CD8-positive, alpha-beta memory T cell (primary cell): ENCODE measurements at regions of chr10 and their contacts with region 1.

Region 1: DNA sequence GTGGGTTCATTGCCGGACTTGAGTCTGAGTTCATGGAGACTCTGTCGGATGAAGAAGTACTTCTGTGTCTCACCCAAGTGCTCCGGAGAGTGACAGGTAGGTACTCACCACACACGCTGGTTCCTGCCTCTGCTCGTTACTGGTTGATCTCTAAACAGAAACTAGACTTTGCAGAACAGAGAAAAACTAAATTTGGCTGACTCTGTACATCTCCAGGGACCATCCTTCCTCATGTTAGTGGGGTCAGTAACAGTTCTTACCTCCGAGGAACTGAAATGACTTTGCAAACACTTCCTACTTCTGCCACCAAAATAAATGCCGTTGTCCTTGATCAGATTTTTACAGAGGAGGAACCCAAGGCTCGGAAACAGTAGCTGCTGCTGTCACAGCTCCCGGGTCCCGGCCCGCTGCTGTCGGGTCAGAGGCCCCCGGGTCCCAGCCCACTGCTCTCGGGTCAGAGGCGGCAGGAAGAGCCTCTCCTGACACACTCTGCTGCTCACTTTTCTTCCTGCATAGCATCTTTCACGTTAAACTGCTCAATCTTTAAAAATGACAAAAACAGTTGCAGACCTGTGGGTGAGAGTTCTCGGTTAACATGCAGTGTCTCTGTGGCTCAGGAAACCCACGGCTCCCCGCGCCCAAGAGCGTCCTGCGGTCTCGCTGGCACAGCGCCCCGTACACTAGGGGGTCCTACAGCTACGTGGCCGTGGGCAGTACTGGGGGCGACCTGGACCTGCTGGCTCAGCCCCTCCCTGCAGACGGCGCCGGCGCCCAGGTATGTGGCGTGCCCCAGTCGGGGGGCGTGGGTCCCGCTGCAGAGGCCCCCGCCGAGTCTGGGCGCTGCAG is 4.8 kb upstream of the MTG1 start:
- DNase-seq: peak; percentile 27 to 68 (median 45)
- H3K4me3 ChIP-seq: peak overlapping the region; percentile 84
- H3K4me3 Mint-ChIP-seq: peak overlapping the region; percentile 80 to 91 (median 88)
- H3K27ac ChIP-seq: peak overlapping the region; percentile 81
- H3K27ac Mint-ChIP-seq: peak overlapping the region; percentile 87 to 97 (median 94)
- H3K4me1 ChIP-seq: peaks cover 38% of the 10 kb centered on the region
- H3K4me1 Mint-ChIP-seq: peaks cover 36 to 48% (median 42%) of the 10 kb centered on the region in 3 donors
- H3K27me3 ChIP-seq: no peaks in the 10 kb centered on the region
- H3K27me3 Mint-ChIP-seq: no peaks in the 10 kb centered on the region

Region 2: GRCh38 chr10:133335246-133336117 is 53.7 kb before region 1 on chr10:
- CTCF ChIA-PET with region 1: interaction called, 6 read pairs
- POLR2A ChIA-PET with region 1: interaction called, 23 read pairs
- DNase-seq: peak; percentile 81 to 96 (median 87)
- H3K4me3 ChIP-seq: peak overlapping the region; percentile 56
- H3K4me3 Mint-ChIP-seq: peak overlapping the region; percentile 71 to 91 (median 82)
- H3K27ac ChIP-seq: peak overlapping the region; percentile 80
- H3K27ac Mint-ChIP-seq: peak overlapping the region; percentile 71 to 95 (median 94)
- H3K4me1 ChIP-seq: peaks cover 19% of the 10 kb centered on the region
- H3K4me1 Mint-ChIP-seq: peaks cover 3 to 7% (median 4%) of the 10 kb centered on the region in 3 donors
- H3K27me3 ChIP-seq: no peaks in the 10 kb centered on the region
- H3K27me3 Mint-ChIP-seq: peaks cover 0 to 6% of the 10 kb centered on the region in 2 donors

Region 3: DNA sequence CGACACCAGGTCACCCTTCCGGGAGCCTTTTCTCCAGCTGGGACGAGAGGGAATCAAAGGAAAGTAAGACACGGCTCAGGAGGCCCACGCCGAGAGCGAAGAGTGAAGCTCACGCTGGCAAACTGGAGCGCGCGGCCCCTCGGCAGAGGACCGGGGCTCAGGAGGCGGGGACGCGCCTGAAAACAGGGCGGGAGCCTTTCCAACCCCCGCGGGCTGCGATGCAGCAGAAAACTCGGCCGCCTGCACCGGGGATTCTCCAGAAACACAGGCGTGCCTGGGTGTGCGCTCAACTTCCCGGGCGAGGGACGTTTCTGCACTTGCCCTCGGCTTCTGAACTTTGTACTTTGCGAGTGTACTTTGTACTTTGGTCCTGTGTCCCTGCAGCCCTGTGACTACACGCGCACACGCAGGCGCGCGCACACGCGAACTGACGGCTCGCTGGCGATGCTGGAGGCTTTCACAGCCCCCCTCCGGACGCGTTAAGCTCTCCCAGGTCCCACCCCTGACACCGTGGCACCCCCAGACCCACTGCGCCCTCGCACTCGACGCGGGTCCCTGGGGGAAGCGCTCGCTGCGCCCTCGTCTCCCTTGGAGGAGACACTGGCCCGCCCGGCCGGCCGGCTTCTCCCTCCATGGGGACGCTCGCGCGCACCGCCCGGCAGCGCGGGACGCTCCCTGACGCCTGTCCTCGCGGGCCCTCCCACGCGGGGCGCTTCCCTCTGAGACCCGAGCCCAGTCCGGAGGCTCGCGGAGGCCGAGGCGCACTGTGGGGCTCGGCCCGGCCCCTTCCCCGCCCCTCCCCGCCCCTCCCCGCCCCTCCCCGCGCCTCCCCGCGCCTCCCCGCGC is 10.7 kb before region 1 on chr10:
- CTCF ChIA-PET with region 1: interaction called, 4 read pairs
- POLR2A ChIA-PET with region 1: interaction called, 10 read pairs
- DNase-seq: peak; percentile 44 to 75 (median 55)
- H3K4me3 ChIP-seq: peak overlapping the region; percentile 78
- H3K4me3 Mint-ChIP-seq: peak overlapping the region; percentile 86 to 92 (median 87)
- H3K27ac ChIP-seq: peak overlapping the region; percentile 59
- H3K27ac Mint-ChIP-seq: peak overlapping the region in 5 of 8 donors; percentile 22 to 83 (median 64)
- H3K4me1 ChIP-seq: peaks cover 6% of the 10 kb centered on the region
- H3K4me1 Mint-ChIP-seq: peaks cover 7 to 37% (median 13%) of the 10 kb centered on the region in 3 donors
- H3K27me3 ChIP-seq: no peaks in the 10 kb centered on the region
- H3K27me3 Mint-ChIP-seq: peaks cover 0 to 1% of the 10 kb centered on the region in 2 donors

Region 4: DNA sequence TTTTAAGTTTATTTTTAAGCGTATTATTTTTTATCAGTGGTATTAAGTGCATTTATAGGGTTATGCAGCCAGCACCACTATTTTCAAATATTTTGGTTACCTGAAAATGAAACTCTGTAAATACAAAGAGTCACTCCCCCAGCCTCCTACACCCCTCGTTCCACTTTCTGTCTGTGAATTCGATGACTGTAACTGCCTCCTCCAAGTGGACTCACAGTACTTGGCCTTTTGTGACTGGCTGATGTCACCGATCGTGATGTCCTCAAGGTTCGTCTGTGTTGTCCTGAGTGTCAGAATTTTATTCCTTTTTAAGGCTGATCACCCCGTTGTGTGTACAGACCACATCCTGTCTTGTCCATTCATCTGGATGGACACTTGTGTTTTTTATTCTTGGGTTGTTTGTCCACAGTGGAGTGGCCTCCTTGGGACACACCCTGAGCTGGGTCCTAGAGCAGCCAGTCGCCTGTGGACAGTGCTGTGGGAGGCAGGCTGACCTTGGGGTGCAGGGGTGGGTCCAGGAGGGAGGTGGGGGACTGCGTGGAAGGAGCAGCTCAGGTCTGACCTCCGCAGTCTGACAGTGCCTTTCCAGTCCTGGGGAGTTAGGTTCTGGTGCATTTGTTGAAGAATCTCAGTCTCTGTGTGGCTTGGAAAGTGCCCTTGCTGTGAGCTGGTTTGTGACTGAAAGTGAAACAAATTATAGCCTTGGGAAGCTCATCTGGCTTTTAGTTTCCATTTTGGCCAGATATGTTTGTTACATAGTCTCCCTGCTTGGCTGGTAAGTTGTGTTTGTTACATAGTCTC is 11.6 kb after region 1 on chr10:
- CTCF ChIA-PET with region 1: no interaction called
- POLR2A ChIA-PET with region 1: no interaction called
- DNase-seq: no peak
- H3K4me3 ChIP-seq: no peak overlapping the region
- H3K4me3 Mint-ChIP-seq: peak overlapping the region in 2 of 7 donors; percentile 9 to 28
- H3K27ac ChIP-seq: no peak overlapping the region
- H3K27ac Mint-ChIP-seq: peak overlapping the region; percentile 3 to 90 (median 65)
- H3K4me1 ChIP-seq: no peaks in the 10 kb centered on the region
- H3K4me1 Mint-ChIP-seq: peaks cover 35 to 60% (median 48%) of the 10 kb centered on the region in 3 donors
- H3K27me3 ChIP-seq: no peaks in the 10 kb centered on the region
- H3K27me3 Mint-ChIP-seq: no peaks in the 10 kb centered on the region